Ovary (tissue), 10 donors: ENCODE measurements at regions of chr11 and their contacts with region 1.

Region 1: GRCh38 chr11:85810871-85811611 is at the start of gene SYTL2:
- DNase-seq: peak; percentile 35 to 68 (median 61)
- H3K4me3 ChIP-seq: peak within 1 kb of the TSS; percentile 76
- H3K27ac ChIP-seq: no peak within 1 kb of the TSS
- H3K4me1 ChIP-seq: peaks cover 3% of the 10 kb centered on the region
- H3K27me3 ChIP-seq: no peaks in the 10 kb centered on the region
- CTCF ChIP-seq: no peak
- EP300 ChIP-seq: no peak
- POLR2A ChIP-seq: peak; percentile 19
- total RNA-seq, gene SYTL2: 4.2 to 13.7 (median 8.2) TPM

Region 2: DNA sequence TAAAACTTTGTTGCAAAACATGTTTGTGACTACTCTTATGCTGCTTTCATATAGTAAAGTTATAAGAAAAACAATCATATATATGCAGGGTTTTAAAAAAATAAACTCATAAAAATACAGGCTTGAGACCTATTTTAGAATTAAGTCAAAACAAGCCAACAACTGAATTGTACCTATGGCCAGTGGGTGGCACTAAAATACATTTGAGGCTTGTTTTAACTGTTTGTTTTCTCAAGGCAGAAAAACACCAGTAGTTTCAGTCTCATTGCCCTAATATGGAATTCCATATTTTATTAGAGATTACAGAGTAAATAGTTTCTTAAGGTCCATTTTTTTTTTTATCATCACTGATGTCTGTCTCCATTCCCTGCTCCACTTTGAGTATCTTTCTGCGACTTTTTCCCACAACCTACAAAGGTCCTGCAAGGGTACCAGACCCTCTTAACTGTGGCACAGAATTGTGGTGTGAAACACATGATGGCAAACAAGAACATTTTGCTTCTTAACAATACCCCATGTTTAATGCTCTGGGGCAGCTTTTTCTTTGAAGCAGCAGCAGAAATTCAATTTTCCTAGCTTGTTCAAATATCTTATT is 116.6 kb before region 1 on chr11:
- intact Hi-C with region 1: loop called in 2 of 4 experiments (anchors 10 kb)
- DNase-seq: no peak
- H3K4me3 ChIP-seq: no peak overlapping the region
- H3K27ac ChIP-seq: no peak overlapping the region
- H3K4me1 ChIP-seq: no peaks in the 10 kb centered on the region
- H3K27me3 ChIP-seq: no peaks in the 10 kb centered on the region
- CTCF ChIP-seq: peak in 1 of 3 donors; percentile 29
- EP300 ChIP-seq: no peak
- POLR2A ChIP-seq: no peak

Region 3: GRCh38 chr11:85759915-85760314 is 51.1 kb before region 1 on chr11:
- intact Hi-C with region 1: loop called in 1 of 4 experiments (anchors 5 kb)
- DNase-seq: no peak
- H3K4me3 ChIP-seq: no peak overlapping the region
- H3K27ac ChIP-seq: no peak overlapping the region
- H3K4me1 ChIP-seq: no peaks in the 10 kb centered on the region
- H3K27me3 ChIP-seq: no peaks in the 10 kb centered on the region
- CTCF ChIP-seq: no peak
- EP300 ChIP-seq: no peak
- POLR2A ChIP-seq: no peak